ENCODE measurements at regions of chr11 and their contacts with region 1.

Region 1: DNA sequence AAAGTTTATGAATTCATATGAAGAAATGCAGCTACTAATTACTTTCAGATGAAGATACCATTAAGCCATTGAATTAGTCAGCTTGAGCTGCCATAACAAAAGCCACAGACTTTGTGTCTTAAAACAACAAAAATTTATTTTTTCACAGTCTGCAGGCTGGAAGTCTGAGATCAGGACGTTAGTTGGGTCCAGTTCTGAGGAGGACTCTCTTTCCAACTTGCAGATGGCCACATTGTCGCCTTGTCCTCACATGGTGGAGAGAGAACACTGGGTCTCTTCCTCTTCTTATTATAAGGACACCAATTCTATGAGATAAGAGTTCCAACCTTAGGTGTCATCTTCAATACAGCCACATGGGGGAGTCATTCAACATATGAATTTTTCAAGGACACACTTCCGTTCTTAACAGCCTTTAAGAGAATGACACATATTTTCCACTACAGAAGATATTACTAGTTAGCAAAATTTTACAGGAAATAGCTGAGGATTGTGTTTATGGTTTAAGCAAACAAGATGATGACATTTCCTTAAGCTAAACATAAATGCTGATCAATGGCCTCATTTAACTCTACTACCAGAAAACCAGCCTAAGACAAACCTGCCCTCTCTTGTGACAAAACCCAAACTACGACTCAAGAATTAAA is 56.0 kb downstream of the DCUN1D5 start:
- DNase-seq: peak; percentile 47
- H3K4me3 Mint-ChIP-seq: peak overlapping the region; percentile 9
- H3K27ac Mint-ChIP-seq: peak overlapping the region; percentile 83
- H3K4me1 Mint-ChIP-seq: peaks cover 29% of the 10 kb centered on the region
- H3K27me3 Mint-ChIP-seq: no peaks in the 10 kb centered on the region

Region 2: GRCh38 chr11:102599642-102600261 is 436.2 kb before region 1 on chr11:
- intact Hi-C with region 1: loop called (anchors 10 kb)
- DNase-seq: no peak
- H3K4me3 Mint-ChIP-seq: no peak overlapping the region
- H3K27ac Mint-ChIP-seq: peak overlapping the region; percentile 64
- H3K4me1 Mint-ChIP-seq: peaks cover 47% of the 10 kb centered on the region
- H3K27me3 Mint-ChIP-seq: no peaks in the 10 kb centered on the region

Region 3: GRCh38 chr11:102886999-102887398 is 148.9 kb before region 1 on chr11:
- intact Hi-C with region 1: no loop called
- DNase-seq: no peak
- H3K4me3 Mint-ChIP-seq: no peak overlapping the region
- H3K27ac Mint-ChIP-seq: no peak overlapping the region
- H3K4me1 Mint-ChIP-seq: peaks cover 11% of the 10 kb centered on the region
- H3K27me3 Mint-ChIP-seq: no peaks in the 10 kb centered on the region

Region 4: GRCh38 chr11:103070142-103070541 is 34.2 kb after region 1 on chr11:
- intact Hi-C with region 1: loop called (anchors 5 kb)
- DNase-seq: no peak
- H3K4me3 Mint-ChIP-seq: no peak overlapping the region
- H3K27ac Mint-ChIP-seq: peak overlapping the region; percentile 20
- H3K4me1 Mint-ChIP-seq: peaks cover 37% of the 10 kb centered on the region
- H3K27me3 Mint-ChIP-seq: no peaks in the 10 kb centered on the region

Region 5: GRCh38 chr11:103108933-103109817 is 73.3 kb after region 1 on chr11 and contains the start of gene DYNC2H1:
- intact Hi-C with region 1: loop called (anchors 1 kb)
- DNase-seq: peak; percentile 87
- H3K4me3 Mint-ChIP-seq: peak within 1 kb of the TSS; percentile 92
- H3K27ac Mint-ChIP-seq: peak within 1 kb of the TSS; percentile 90
- H3K4me1 Mint-ChIP-seq: peaks cover 8% of the 10 kb centered on the region
- H3K27me3 Mint-ChIP-seq: peaks cover 35% of the 10 kb centered on the region
- total RNA-seq, gene DYNC2H1: 0.91 and 1.1 TPM in 2 replicates

Measured in activated T-helper 1 cell treated with anti-CD3 and anti-CD28 coated beads, Interleukin-12 subunit alpha, Interleukin-12 subunit beta, Interleukin-2, Interleukin-4 antibody, amounts not matched to agents 30 ng/mL and 10 ng/mL and 1 ng/mL, durations not matched to agents 14 hours and 24 hours and 36 hours (primary cell).